Posterior cingulate gyrus (tissue), 11 donors: ENCODE measurements at regions of chr12 and their contacts with region 1.

Region 1: GRCh38 chr12:3035815-3036702 is 41.1 kb upstream of the TSPAN9 start:
- DNase-seq: peak in 7 of 10 donors; percentile 21 to 92 (median 51)

Region 2: DNA sequence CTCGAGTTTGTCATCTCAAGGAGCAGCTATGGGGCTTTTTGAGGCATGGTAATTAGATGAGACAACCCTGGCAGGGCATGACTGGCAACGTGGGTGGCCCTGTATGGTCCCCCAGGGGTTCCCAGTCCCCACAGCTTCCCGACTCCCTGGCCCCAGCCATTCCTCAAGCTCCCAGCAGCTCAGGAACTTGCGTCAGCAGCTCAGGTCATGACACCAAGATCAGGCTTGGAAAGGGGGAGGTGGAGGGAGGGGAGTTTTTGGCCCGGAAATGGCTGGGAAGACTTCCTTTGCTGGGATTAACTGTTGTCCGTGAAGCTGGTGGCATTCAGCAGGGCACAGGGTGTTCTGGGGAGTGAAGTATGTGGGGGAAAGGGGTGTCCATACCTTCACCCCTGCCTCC is 190.8 kb before region 1 on chr12:
- intact Hi-C with region 1: loop called (anchors 5 kb)
- DNase-seq: peak in 2 of 10 donors; percentile 32 to 77

Region 3: GRCh38 chr12:2890388-2891239 is 145.4 kb before region 1 on chr12 and contains the start of gene TULP3:
- intact Hi-C with region 1: loop called (anchors 5 kb)
- DNase-seq: peak; percentile 98 to 100 (median 100)

Region 4: GRCh38 chr12:2988494-2988893 is 47.6 kb before region 1 on chr12:
- intact Hi-C with region 1: no loop called
- DNase-seq: no peak